ENCODE measurements at regions of chr10 and their contacts with region 1.

Region 1: DNA sequence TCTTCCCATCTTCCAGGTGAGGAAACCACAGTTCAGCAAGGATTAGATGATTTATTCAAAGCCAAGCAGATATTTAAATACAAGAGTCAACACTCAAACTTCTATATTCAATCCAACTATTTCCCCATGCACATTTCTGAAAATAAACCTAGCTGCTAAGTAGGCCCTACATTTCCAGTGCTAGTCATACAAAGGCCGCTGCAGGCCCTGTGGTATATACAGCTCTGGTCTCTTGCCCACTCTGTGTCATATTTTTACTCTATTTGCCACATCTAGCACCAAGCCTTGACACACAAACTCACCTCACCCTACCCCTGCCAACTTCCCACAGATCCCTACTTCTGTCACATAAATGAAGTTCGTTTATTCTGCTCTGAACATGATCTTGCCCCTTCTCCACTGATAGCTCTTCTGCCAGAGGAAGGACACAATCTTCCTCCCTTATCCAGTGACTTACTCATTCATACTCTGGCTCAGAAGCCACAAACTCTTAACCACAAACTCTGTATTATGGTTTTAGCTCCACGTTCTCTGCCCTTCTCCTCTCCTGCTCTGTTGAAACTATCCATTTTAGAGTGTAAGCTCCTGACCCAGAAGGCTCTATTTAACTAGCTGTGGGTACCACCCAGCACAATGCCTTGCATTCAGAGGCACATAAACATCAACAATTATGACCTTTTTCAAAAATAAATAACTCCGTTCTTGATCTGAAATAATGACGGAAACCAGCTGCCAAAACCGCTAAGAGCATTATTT is 180.7 kb downstream of the CPEB3 start:
- DNase-seq: no peak
- ATAC-seq: no peak
- H3K4me3 ChIP-seq: no peak overlapping the region
- H3K4me3 Mint-ChIP-seq: no peak overlapping the region
- H3K27ac ChIP-seq: no peak overlapping the region
- H3K27ac Mint-ChIP-seq: no peak overlapping the region
- H3K4me1 ChIP-seq: no peaks in the 10 kb centered on the region
- H3K4me1 Mint-ChIP-seq: peaks cover 2% of the 10 kb centered on the region
- H3K27me3 ChIP-seq: no peaks in the 10 kb centered on the region
- H3K27me3 Mint-ChIP-seq: no peaks in the 10 kb centered on the region
- CTCF ChIP-seq: no peak

Region 2: DNA sequence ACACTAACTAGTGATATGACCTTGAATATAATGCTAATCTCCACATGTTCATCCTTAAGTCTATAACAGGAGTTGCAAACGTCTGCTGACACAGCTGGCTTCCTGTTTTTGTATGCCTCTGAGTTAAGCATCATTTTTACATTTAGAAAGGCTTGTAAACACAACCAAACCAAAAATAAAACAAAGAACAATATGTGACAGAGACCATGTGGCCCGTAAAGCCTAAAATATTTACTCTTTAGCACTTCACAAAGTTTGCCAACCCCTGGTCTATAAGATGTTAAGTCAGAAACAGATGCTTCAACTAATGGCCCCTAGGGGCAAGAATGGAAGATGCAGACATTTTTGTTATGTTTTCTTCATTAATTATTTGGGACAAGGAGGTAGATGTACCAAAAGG is 71.4 kb after region 1 on chr10:
- CTCF ChIA-PET with region 1: no interaction called
- POLR2A ChIA-PET with region 1: no interaction called
- intact Hi-C with region 1: loop called (anchors 10 kb)
- DNase-seq: peak; percentile 19
- ATAC-seq: no peak
- H3K4me3 ChIP-seq: no peak overlapping the region
- H3K4me3 Mint-ChIP-seq: no peak overlapping the region
- H3K27ac ChIP-seq: peak overlapping the region in 1 of 2 donors; percentile 18
- H3K27ac Mint-ChIP-seq: no peak overlapping the region
- H3K4me1 ChIP-seq: peaks cover 5 to 6% of the 10 kb centered on the region in 2 donors
- H3K4me1 Mint-ChIP-seq: peaks cover 6% of the 10 kb centered on the region
- H3K27me3 ChIP-seq: no peaks in the 10 kb centered on the region
- H3K27me3 Mint-ChIP-seq: no peaks in the 10 kb centered on the region
- CTCF ChIP-seq: peak; percentile 43

Measured in B cell (primary cell).